Dendritic cell treated with granulocyte-macrophage colony-stimulating factor and Interleukin-4, amounts not matched to agents 40 ng/mL and 50 ng/mL, for 4 days (primary cell): ENCODE measurements at regions of chr10 and their contacts with region 1.

Region 1: GRCh38 chr10:116687633-116688032 is 54.7 kb downstream of the HSPA12A start:
- H3K4me3 Mint-ChIP-seq: no peak overlapping the region
- H3K27ac Mint-ChIP-seq: no peak overlapping the region
- H3K4me1 Mint-ChIP-seq: no peaks in the 10 kb centered on the region
- H3K27me3 Mint-ChIP-seq: peaks cover 16% of the 10 kb centered on the region

Region 2: GRCh38 chr10:116608686-116609594 is 78.7 kb before region 1 on chr10:
- intact Hi-C with region 1: no loop called
- H3K4me3 Mint-ChIP-seq: no peak overlapping the region
- H3K27ac Mint-ChIP-seq: no peak overlapping the region
- H3K4me1 Mint-ChIP-seq: no peaks in the 10 kb centered on the region
- H3K27me3 Mint-ChIP-seq: peaks cover 22% of the 10 kb centered on the region

Region 3: GRCh38 chr10:116787893-116788665 is 100.4 kb after region 1 on chr10:
- intact Hi-C with region 1: loop called (anchors 1 kb)
- H3K4me3 Mint-ChIP-seq: peak overlapping the region; percentile 30
- H3K27ac Mint-ChIP-seq: no peak overlapping the region
- H3K4me1 Mint-ChIP-seq: no peaks in the 10 kb centered on the region
- H3K27me3 Mint-ChIP-seq: peaks cover 41% of the 10 kb centered on the region

Region 4: DNA sequence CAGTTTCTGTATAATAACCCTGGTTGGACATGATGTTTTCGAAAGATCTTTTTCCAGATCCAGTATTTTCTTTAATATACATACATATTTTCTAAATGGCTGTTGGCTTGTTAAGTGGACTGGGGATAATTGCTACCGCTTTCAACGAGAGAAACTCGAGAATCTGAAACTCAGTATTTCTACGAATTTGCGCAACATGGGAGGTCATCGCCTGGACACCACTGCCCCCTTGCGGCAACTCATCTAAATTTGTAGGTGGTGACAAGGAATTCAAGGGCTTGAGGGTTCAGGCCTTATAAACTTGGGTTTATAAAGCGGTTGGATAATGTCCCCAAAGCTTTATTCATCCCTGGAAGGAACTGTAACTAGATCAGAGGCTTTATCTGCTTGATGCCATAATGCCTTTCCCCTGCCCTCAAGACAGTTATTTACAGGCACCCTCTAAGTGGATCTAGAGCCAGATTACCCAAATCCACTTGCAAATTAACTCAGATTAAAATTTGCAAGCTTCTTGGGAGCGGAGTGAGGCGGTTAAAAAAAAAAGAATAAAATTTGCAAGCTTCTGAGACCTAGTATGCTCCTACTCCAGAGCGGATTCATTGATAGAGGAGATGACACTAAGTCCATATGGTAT is 488.4 kb after region 1 on chr10:
- intact Hi-C with region 1: loop called (anchors 1 kb)
- H3K4me3 Mint-ChIP-seq: peak overlapping the region; percentile 66
- H3K27ac Mint-ChIP-seq: no peak overlapping the region
- H3K4me1 Mint-ChIP-seq: peaks cover 15% of the 10 kb centered on the region
- H3K27me3 Mint-ChIP-seq: peaks cover 72% of the 10 kb centered on the region